HCT116 (cell line): ENCODE measurements at regions of chr9 and their contacts with region 1.

Region 1: DNA sequence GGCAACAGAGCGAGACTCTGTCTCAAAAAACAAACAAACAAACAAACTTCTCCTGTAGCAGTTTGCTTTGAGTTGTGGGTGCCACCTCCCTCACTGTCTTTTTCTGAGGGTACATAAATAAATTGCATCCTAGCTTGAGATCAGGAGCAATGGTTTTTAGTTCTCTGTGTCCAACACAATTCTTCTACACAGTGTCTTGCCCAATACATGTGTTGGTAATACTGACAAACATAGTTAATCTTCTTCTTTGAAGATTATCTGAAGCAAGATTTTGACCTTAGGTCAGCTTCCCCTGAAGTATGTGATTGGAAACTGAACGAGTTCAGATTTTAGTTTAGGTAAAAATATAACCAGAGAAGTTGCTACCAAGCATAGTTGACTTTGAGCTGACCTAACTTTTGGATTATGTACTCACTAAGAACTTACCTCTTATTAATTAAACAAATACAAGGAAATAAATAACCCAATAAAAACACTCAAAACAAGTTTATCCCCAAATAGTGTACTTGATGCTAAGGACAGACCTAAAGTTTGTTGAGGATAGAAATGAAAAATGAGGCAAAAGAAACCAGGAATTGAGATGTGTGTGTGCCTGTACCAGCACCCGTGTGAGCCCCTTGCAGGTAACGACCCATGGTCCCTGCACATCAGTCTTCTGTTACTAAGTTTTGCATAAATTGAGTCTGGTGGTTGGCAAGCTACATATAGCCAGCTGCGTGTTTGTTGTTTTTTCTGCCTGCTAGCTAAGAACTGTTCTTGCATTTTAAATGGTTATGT is 16.2 kb downstream of the TJP2 start:
- DNase-seq: no peak
- ATAC-seq: no peak
- H3K4me3 ChIP-seq: no peak overlapping the region
- H3K27ac ChIP-seq: no peak overlapping the region
- H3K4me1 ChIP-seq: peaks cover 12 to 19% of the 10 kb centered on the region in 2 experiments
- H3K27me3 ChIP-seq: no peaks in the 10 kb centered on the region
- CTCF ChIP-seq: no peak
- POLR2A ChIP-seq: no peak
- RAD21 ChIP-seq: no peak

Region 2: DNA sequence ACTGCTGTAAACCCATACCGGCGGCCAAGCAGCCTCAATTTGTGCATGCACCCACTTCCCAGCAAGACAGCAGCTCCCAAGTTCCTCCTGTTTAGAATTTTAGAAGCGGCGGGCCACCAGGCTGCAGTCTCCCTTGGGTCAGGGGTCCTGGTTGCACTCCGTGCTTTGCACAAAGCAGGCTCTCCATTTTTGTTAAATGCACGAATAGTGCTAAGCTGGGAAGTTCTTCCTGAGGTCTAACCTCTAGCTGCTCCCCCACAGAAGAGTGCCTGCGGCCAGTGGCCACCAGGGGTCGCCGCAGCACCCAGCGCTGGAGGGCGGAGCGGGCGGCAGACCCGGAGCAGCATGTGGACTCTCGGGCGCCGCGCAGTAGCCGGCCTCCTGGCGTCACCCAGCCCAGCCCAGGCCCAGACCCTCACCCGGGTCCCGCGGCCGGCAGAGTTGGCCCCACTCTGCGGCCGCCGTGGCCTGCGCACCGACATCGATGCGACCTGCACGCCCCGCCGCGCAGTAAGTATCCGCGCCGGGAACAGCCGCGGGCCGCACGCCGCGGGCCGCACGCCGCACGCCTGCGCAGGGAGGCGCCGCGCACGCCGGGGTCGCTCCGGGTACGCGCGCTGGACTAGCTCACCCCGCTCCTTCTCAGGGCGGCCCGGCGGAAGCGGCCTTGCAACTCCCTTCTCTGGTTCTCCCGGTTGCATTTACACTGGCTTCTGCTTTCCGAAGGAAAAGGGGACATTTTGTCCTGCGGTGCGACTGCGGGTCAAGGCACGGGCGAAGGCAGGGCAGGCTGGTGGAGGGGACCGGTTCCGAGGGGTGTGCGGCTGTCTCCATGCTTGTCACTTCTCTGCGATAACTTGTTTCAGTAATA is 154.6 kb before region 1 on chr9 and contains the start of gene FXN:
- CTCF ChIA-PET with region 1: interaction called, 10 read pairs
- POLR2A ChIA-PET with region 1: no interaction called
- RAD21 ChIA-PET with region 1: no interaction called
- intact Hi-C with region 1: no loop called
- DNase-seq: peak; percentile 56
- ATAC-seq: peak; percentile 96
- H3K4me3 ChIP-seq: peak within 1 kb of the TSS; percentile 87 to 90
- H3K27ac ChIP-seq: peak within 1 kb of the TSS; percentile 72
- H3K4me1 ChIP-seq: peaks cover 0 to 11% of the 10 kb centered on the region in 2 experiments; a peak in 2 of 4 replicates
- H3K27me3 ChIP-seq: no peaks in the 10 kb centered on the region
- CTCF ChIP-seq: peak; percentile 82 to 95 (median 93)
- POLR2A ChIP-seq: peak; percentile 61
- RAD21 ChIP-seq: peak; percentile 71
- total RNA-seq, gene FXN: 24.1 TPM

Region 3: GRCh38 chr9:69056191-69056815 is 134.0 kb before region 1 on chr9:
- CTCF ChIA-PET with region 1: interaction called, 74 read pairs
- POLR2A ChIA-PET with region 1: no interaction called
- RAD21 ChIA-PET with region 1: interaction called, 3 to 6 read pairs
- intact Hi-C with region 1: loop called (anchors 1 kb)
- DNase-seq: no peak
- ATAC-seq: no peak
- H3K4me3 ChIP-seq: no peak overlapping the region
- H3K27ac ChIP-seq: no peak overlapping the region
- H3K4me1 ChIP-seq: no peaks in the 10 kb centered on the region
- H3K27me3 ChIP-seq: no peaks in the 10 kb centered on the region
- CTCF ChIP-seq: no peak
- POLR2A ChIP-seq: no peak
- RAD21 ChIP-seq: no peak

Region 4: DNA sequence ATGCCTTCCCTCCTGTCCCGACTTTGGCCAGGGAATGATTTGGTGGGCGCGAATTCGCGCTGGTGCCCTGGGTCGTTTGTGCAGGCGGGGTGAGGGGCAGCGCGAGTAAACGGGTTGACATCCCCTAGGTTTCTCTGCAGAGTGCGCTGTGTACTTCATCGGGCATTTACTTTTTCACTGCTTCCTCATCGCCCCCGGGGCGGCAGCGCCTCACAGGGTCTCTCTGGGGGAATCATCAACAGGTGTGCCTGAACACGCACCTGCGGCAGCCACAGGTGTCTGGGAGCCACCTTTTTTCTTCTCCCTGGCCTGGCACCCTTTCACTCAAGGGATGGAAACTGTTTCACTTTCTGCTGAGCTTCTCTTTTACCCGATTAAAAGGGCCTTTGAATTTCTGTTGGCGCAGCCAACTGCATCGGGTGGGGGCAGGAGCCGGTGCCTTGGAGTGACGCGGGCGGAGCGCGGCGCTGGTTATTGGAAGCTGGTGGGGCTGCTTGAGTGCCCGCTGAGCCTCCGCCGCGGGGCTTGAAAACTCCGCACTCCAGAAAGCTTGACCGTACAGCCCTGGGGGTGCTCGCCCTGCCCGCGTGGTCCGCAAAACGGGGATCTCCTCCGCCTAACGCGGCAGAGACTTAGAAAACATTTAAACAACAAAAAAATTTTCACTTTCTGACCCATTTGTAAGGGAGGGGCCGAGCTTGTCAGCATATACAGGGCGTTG is 68.3 kb before region 1 on chr9:
- CTCF ChIA-PET with region 1: interaction called, 3 read pairs
- POLR2A ChIA-PET with region 1: no interaction called
- RAD21 ChIA-PET with region 1: no interaction called
- intact Hi-C with region 1: loop called (anchors 5 kb)
- DNase-seq: no peak
- ATAC-seq: peak; percentile 36
- H3K4me3 ChIP-seq: peak overlapping the region; percentile 75 to 85
- H3K27ac ChIP-seq: peak overlapping the region; percentile 100
- H3K4me1 ChIP-seq: peaks cover 22 to 47% of the 10 kb centered on the region in 2 experiments
- H3K27me3 ChIP-seq: no peaks in the 10 kb centered on the region
- CTCF ChIP-seq: no peak
- POLR2A ChIP-seq: no peak
- RAD21 ChIP-seq: 0 out of 2 replicates have a peak, but pooled peaks have one; percentile 1